Sigmoid colon (tissue), 7 donors: ENCODE measurements at regions of chr1 and their contacts with region 1.

Region 1: GRCh38 chr1:42335050-42335808 is at the start of gene FOXJ3:
- DNase-seq: peak; percentile 95
- H3K4me3 ChIP-seq: peak within 1 kb of the TSS; percentile 80 to 97 (median 89)
- H3K27ac ChIP-seq: peak within 1 kb of the TSS; percentile 92 to 97 (median 96)
- H3K4me1 ChIP-seq: peaks cover 0 to 37% (median 32%) of the 10 kb centered on the region in 4 donors
- H3K27me3 ChIP-seq: no peaks in the 10 kb centered on the region
- CTCF ChIP-seq: no peak
- EP300 ChIP-seq: no peak
- POLR2A ChIP-seq: peak; percentile 28
- total RNA-seq, gene FOXJ3: 39.9 to 53.8 (median 47.4) TPM

Region 2: DNA sequence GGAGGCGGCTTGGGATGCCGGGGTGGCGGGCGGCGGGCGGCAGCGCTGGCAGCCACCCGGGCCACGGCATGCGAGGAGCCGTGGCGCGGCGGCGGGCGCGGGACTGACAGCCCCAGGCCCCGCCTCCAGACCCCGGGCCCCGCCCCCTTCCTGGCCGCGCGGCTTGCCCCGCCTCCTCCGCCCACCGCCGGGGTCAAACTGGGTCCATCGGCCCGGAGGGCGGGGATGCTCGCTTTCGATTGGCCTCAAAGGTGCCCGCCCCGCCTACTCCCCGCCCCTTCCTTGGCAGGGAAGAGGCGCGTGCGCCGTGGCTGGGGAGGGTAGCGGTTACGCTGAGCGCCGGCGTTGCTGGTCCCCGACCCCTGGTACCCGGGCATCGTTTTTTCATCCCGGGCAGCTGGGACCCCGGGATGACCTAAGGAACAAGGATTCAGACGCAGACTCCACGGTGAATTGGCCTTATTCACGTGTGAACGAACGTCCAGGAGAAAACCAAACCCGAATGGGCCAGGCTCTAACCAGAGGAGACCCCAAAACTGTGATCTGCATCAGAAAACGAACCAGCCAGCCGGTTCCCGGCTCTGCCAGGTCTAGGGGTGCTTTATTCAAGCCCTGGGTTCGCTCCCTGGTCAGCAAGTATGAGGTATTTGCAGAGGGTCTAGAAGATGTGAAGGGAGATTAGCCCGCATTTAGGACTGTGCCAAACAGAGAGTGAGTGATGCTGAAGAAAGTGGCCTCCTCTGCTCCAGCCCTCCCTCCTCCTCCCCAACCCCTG is 299.2 kb before region 1 on chr1:
- intact Hi-C with region 1: loop called (anchors 10 kb)
- DNase-seq: peak; percentile 98
- H3K4me3 ChIP-seq: peak overlapping the region; percentile 32 to 98 (median 82)
- H3K27ac ChIP-seq: peak overlapping the region; percentile 76 to 85 (median 82)
- H3K4me1 ChIP-seq: peaks cover 0 to 11% (median 11%) of the 10 kb centered on the region in 4 donors
- H3K27me3 ChIP-seq: no peaks in the 10 kb centered on the region
- CTCF ChIP-seq: no peak
- EP300 ChIP-seq: no peak
- POLR2A ChIP-seq: peak in 1 of 2 donors; percentile 14

Region 3: DNA sequence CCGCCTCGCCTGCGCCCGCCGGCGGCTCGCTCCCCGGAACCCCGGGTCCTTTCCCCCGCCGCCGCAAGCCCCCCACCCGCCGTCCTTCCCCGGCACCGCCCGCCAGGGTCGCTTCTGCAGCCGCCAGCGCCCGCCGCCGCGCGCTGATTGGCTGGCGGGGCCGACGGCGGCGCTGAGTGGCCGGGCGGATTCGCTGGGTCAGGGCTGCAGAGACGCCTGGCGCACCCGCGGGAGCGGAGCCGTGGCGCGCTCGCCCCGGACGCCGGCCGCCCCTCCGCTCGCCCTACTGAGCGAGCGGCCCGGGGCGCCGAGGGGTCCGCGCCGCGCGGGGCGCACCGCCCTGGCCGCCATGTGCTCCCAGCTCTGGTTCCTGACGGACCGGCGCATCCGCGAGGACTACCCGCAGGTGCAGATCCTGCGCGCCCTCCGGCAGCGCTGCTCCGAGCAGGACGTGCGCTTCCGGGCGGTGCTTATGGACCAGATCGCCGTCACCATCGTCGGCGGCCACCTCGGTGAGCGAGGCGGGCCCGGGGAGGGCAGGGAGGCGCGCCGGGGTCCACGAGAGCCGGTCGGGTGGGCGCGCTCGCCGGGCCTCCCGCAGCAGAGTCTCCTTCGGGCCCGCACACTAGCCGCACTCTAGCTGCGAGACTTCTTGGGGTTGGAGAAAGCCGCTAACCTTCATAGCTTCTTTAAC is 45.5 kb after region 1 on chr1 and contains the start of gene RIMKLA:
- intact Hi-C with region 1: loop called (anchors 5 kb)
- DNase-seq: peak; percentile 77
- H3K4me3 ChIP-seq: peak within 1 kb of the TSS; percentile 51 to 71 (median 68)
- H3K27ac ChIP-seq: peak within 1 kb of the TSS; percentile 71 to 85 (median 72)
- H3K4me1 ChIP-seq: peaks cover 0 to 16% (median 12%) of the 10 kb centered on the region in 4 donors
- H3K27me3 ChIP-seq: no peaks in the 10 kb centered on the region
- CTCF ChIP-seq: no peak
- EP300 ChIP-seq: no peak
- POLR2A ChIP-seq: no peak
- total RNA-seq, gene RIMKLA: 2.1 to 11.4 (median 3.6) TPM

Region 4: GRCh38 chr1:42456010-42456758 is 121.0 kb after region 1 on chr1 and contains the starts of genes PPCS and ZMYND12:
- intact Hi-C with region 1: loop called (anchors 1 kb)
- DNase-seq: peak; percentile 92
- H3K4me3 ChIP-seq: peak within 1 kb of the TSS; percentile 80 to 99 (median 92)
- H3K27ac ChIP-seq: peak within 1 kb of the TSS; percentile 88 to 93 (median 90)
- H3K4me1 ChIP-seq: peaks cover 0 to 24% (median 19%) of the 10 kb centered on the region in 4 donors
- H3K27me3 ChIP-seq: no peaks in the 10 kb centered on the region
- CTCF ChIP-seq: peak in 2 of 4 experiments; percentile 23 to 45
- EP300 ChIP-seq: no peak
- POLR2A ChIP-seq: peak; percentile 36 to 66
- total RNA-seq, gene PPCS: 32.1 to 99.9 (median 52.5) TPM
- total RNA-seq, gene ZMYND12: 0.54 to 1.1 (median 0.77) TPM

Region 5: GRCh38 chr1:42551180-42551579 is 216.0 kb after region 1 on chr1:
- intact Hi-C with region 1: no loop called
- DNase-seq: no peak
- H3K4me3 ChIP-seq: no peak overlapping the region
- H3K27ac ChIP-seq: no peak overlapping the region
- H3K4me1 ChIP-seq: no peaks in the 10 kb centered on the region
- H3K27me3 ChIP-seq: no peaks in the 10 kb centered on the region
- CTCF ChIP-seq: no peak
- EP300 ChIP-seq: no peak
- POLR2A ChIP-seq: no peak

Region 6: GRCh38 chr1:42681741-42682483 is 346.7 kb after region 1 on chr1 and contains the start of gene YBX1:
- intact Hi-C with region 1: loop called (anchors 2 kb)
- DNase-seq: peak; percentile 99
- H3K4me3 ChIP-seq: peak within 1 kb of the TSS; percentile 78 to 96 (median 93)
- H3K27ac ChIP-seq: peak within 1 kb of the TSS; percentile 92 to 99 (median 96)
- H3K4me1 ChIP-seq: peaks cover 0 to 54% (median 48%) of the 10 kb centered on the region in 4 donors
- H3K27me3 ChIP-seq: no peaks in the 10 kb centered on the region
- CTCF ChIP-seq: no peak
- EP300 ChIP-seq: no peak
- POLR2A ChIP-seq: peak; percentile 84 to 85
- total RNA-seq, gene YBX1: 685 to 773 (median 728) TPM